ENCODE measurements at regions of chr4 and their contacts with region 1.

Region 1: GRCh38 chr4:7630568-7631287 is 196.0 kb upstream of the PSAPL1 start:
- DNase-seq: peak in 1 of 3 donors; percentile 44
- H3K4me3 ChIP-seq: no peak overlapping the region
- H3K4me3 Mint-ChIP-seq: peak overlapping the region in 1 of 2 donors; percentile 11
- H3K27ac ChIP-seq: no peak overlapping the region
- H3K27ac Mint-ChIP-seq: peak overlapping the region in 1 of 7 donors; percentile 13
- H3K4me1 ChIP-seq: peaks cover 17 to 21% of the 10 kb centered on the region in 2 donors
- H3K4me1 Mint-ChIP-seq: peaks cover 35% of the 10 kb centered on the region
- H3K27me3 ChIP-seq: peaks cover 0 to 2% of the 10 kb centered on the region in 2 donors
- H3K27me3 Mint-ChIP-seq: peaks cover 13 to 32% (median 23%) of the 10 kb centered on the region in 3 donors
- CTCF ChIP-seq: no peak

Region 2: GRCh38 chr4:6591313-6591712 is 1039.4 kb before region 1 on chr4:
- intact Hi-C with region 1: no loop called
- DNase-seq: no peak
- H3K4me3 ChIP-seq: no peak overlapping the region
- H3K4me3 Mint-ChIP-seq: no peak overlapping the region
- H3K27ac ChIP-seq: no peak overlapping the region
- H3K27ac Mint-ChIP-seq: peak overlapping the region in 2 of 7 donors; percentile 22 to 58
- H3K4me1 ChIP-seq: no peaks in the 10 kb centered on the region
- H3K4me1 Mint-ChIP-seq: no peaks in the 10 kb centered on the region
- H3K27me3 ChIP-seq: no peaks in the 10 kb centered on the region
- H3K27me3 Mint-ChIP-seq: peaks cover 0 to 2% (median 0%) of the 10 kb centered on the region in 3 donors
- CTCF ChIP-seq: no peak

Region 3: GRCh38 chr4:6806924-6807636 is 823.6 kb before region 1 on chr4:
- intact Hi-C with region 1: no loop called
- DNase-seq: peak; percentile 82 to 94 (median 90)
- H3K4me3 ChIP-seq: peak overlapping the region in 2 of 3 experiments; percentile 27 to 50
- H3K4me3 Mint-ChIP-seq: peak overlapping the region in 1 of 2 donors; percentile 67
- H3K27ac ChIP-seq: peak overlapping the region; percentile 95 to 96
- H3K27ac Mint-ChIP-seq: peak overlapping the region; percentile 98 to 99 (median 99)
- H3K4me1 ChIP-seq: peaks cover 51 to 68% of the 10 kb centered on the region in 2 donors
- H3K4me1 Mint-ChIP-seq: peaks cover 69% of the 10 kb centered on the region
- H3K27me3 ChIP-seq: no peaks in the 10 kb centered on the region
- H3K27me3 Mint-ChIP-seq: no peaks in the 10 kb centered on the region
- CTCF ChIP-seq: no peak

Region 4: DNA sequence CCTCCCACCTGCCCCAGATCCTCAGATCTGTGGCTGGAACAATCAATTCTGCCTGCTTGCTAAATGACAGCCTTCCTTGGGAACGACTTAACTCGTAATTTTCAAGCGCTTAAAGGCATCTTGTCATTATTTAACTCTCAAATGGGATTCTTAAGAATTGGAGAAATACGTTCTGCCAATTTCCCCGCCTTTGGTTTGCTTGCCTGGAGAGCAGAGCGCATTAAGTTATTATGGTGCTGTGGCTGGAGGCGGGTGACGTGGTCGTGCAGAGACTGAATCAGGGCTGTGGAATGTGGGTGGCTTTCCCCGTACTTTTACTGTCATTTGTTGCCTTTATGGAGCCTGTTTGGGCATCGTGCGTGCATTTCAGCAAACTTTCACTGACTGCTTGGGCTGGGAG is 117.1 kb before region 1 on chr4:
- intact Hi-C with region 1: no loop called
- DNase-seq: no peak
- H3K4me3 ChIP-seq: no peak overlapping the region
- H3K4me3 Mint-ChIP-seq: no peak overlapping the region
- H3K27ac ChIP-seq: no peak overlapping the region
- H3K27ac Mint-ChIP-seq: peak overlapping the region in 1 of 7 donors; percentile 75
- H3K4me1 ChIP-seq: no peaks in the 10 kb centered on the region
- H3K4me1 Mint-ChIP-seq: no peaks in the 10 kb centered on the region
- H3K27me3 ChIP-seq: peaks cover 0 to 30% of the 10 kb centered on the region in 2 donors
- H3K27me3 Mint-ChIP-seq: peaks cover 32 to 52% (median 47%) of the 10 kb centered on the region in 3 donors
- CTCF ChIP-seq: no peak

Region 5: DNA sequence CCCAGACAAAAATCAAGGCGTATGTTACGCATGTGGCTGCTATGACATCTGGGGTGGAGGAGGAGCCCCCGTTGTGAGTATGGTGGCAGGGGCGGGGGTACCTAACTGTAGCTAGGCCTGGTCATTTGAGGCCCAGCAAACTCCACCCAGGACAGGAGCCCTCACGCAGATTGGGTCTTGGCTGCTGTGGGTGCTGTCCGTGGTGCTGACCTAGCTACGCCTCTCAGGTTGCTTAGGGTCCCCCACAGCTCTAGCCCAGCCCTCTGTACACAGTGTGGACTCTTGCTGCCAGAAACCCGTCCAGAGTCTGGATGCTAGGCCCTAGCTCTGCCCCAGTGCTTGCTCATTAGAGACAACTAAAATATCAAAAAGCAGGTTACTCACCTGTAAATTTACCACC is 49.3 kb before region 1 on chr4:
- intact Hi-C with region 1: loop called in 1 of 2 experiments (anchors 10 kb)
- DNase-seq: no peak
- H3K4me3 ChIP-seq: no peak overlapping the region
- H3K4me3 Mint-ChIP-seq: no peak overlapping the region
- H3K27ac ChIP-seq: no peak overlapping the region
- H3K27ac Mint-ChIP-seq: no peak overlapping the region
- H3K4me1 ChIP-seq: no peaks in the 10 kb centered on the region
- H3K4me1 Mint-ChIP-seq: no peaks in the 10 kb centered on the region
- H3K27me3 ChIP-seq: no peaks in the 10 kb centered on the region
- H3K27me3 Mint-ChIP-seq: peaks cover 2 to 4% (median 3%) of the 10 kb centered on the region in 3 donors
- CTCF ChIP-seq: no peak